Naive thymus-derived CD4-positive, alpha-beta T cell (primary cell): ENCODE measurements at regions of chr11 and their contacts with region 1.

Region 1: DNA sequence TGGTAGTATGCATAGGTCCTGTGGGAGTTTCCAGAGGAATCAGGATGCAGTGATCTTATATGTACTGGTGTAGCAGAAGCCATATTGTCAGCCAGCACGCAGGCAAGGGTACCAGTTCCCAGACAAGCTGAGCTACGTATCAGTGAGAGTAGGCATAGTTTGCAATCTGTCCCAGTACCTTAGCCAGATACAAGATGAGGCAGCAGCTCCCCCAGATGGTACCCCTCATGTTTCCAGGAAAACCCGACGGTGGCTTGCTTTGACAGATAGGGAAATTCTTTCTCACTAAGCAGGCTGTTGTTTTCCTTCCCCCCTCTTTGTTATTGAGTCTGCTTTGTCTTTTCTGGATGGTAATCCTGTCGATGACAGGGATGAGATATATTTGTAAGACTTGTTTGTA is 109.7 kb upstream of the RRM1 start:
- DNase-seq: peak in 8 of 9 donors; percentile 23 to 55 (median 36)
- ATAC-seq: peak; percentile 69
- H3K4me3 ChIP-seq: no peak overlapping the region
- H3K4me3 Mint-ChIP-seq: peak overlapping the region in 8 of 10 donors; percentile 1 to 43 (median 3)
- H3K27ac ChIP-seq: peak overlapping the region; percentile 5
- H3K27ac Mint-ChIP-seq: peak overlapping the region in 8 of 9 donors; percentile 26 to 90 (median 82)
- H3K4me1 ChIP-seq: peaks cover 20 to 45% of the 10 kb centered on the region in 2 donors
- H3K4me1 Mint-ChIP-seq: peaks cover 53 to 99% (median 93%) of the 10 kb centered on the region in 7 donors
- H3K27me3 ChIP-seq: no peaks in the 10 kb centered on the region
- H3K27me3 Mint-ChIP-seq: no peaks in the 10 kb centered on the region

Region 2: DNA sequence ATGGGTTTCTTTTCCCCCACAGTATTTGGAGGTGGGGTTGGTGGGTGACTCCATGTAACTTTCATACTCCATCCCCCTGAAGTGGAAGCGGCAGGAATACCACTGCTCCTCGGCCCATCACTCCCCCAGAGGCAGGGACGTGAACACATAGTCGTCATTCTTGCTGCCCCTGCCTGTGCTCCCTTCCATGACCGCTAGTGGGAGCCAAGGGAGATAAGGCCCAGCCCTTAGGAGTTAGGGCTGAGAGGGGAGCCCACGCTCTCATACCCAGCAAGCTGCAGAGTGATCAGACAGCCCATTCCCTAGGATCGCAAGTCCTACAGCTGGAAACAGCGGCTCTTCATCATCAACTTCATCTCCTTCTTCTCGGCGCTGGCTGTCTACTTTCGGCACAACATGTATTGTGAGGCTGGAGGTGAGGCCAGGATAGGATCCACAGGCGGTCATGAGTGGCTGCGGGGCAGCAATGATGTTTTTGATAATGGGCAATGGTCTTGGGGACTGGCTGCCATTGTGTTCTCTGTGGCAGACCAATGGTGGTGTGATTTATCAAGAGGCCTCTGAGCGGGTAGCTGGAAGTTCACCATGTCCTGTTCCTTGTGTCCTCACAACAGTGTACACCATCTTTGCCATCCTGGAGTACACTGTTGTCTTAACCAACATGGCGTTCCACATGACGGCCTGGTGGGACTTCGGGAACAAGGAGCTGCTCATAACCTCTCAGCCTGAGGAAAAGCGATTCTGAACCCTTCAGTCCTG is 160.0 kb before region 1 on chr11:
- CTCF ChIA-PET with region 1: no interaction called
- POLR2A ChIA-PET with region 1: no interaction called
- intact Hi-C with region 1: loop called in 1 of 2 experiments (anchors 1 kb)
- DNase-seq: peak; percentile 65 to 83 (median 77)
- ATAC-seq: peak; percentile 97
- H3K4me3 ChIP-seq: no peak overlapping the region
- H3K4me3 Mint-ChIP-seq: no peak overlapping the region
- H3K27ac ChIP-seq: peak overlapping the region; percentile 38
- H3K27ac Mint-ChIP-seq: peak overlapping the region; percentile 60 to 96 (median 87)
- H3K4me1 ChIP-seq: peaks cover 13 to 14% of the 10 kb centered on the region in 2 donors
- H3K4me1 Mint-ChIP-seq: peaks cover 15 to 46% (median 44%) of the 10 kb centered on the region in 7 donors
- H3K27me3 ChIP-seq: no peaks in the 10 kb centered on the region
- H3K27me3 Mint-ChIP-seq: no peaks in the 10 kb centered on the region

Region 3: DNA sequence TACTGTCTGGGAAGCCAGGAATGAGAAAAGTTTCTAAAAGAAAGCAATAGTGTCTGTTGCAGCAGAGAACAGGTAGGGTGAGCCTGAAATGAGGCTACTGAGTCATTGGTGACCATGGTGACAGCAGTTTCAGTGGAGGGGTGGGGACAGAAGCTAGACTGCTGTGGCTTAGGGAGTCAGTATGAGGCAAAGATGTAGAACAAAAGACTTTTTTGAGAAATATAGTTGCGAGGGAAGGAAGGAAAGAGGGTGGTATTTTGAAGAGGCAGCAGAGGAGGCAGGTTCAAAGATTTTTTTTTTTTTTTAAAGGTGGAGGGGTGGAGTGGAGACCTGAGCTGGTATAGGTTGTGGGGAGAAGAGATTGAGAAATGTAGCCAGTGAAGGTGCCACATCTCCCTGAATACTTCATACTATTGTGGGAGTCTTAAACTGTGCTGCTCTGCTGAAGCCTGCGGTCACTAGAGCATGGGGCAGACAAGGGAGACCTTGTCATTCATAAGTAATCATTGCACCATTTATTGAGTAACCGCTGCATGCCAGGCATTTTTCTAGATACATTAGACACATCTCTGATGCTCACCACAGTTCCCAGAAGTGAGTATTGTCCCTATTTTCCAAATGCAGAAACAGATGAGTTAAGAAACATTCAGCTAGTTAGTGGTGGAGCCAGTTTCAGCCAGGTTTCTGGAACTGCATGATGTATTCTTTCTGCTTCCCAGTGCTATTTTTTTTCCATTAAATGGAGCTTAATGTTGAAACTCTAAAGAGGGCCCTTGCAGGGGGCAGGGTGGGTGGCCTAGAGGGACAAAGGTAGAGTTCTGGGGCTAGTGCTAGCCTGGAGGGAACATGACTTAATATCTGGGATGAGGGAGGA is 79.6 kb before region 1 on chr11:
- CTCF ChIA-PET with region 1: no interaction called
- POLR2A ChIA-PET with region 1: interaction called, 3 read pairs
- intact Hi-C with region 1: loop called in 1 of 2 experiments (anchors 1 kb)
- DNase-seq: peak in 8 of 9 donors; percentile 45 to 80 (median 72)
- ATAC-seq: peak; percentile 92
- H3K4me3 ChIP-seq: no peak overlapping the region
- H3K4me3 Mint-ChIP-seq: peak overlapping the region; percentile 9 to 72 (median 54)
- H3K27ac ChIP-seq: peak overlapping the region; percentile 59
- H3K27ac Mint-ChIP-seq: peak overlapping the region; percentile 64 to 91 (median 81)
- H3K4me1 ChIP-seq: peaks cover 41 to 57% of the 10 kb centered on the region in 2 donors
- H3K4me1 Mint-ChIP-seq: peaks cover 66 to 93% (median 84%) of the 10 kb centered on the region in 7 donors
- H3K27me3 ChIP-seq: no peaks in the 10 kb centered on the region
- H3K27me3 Mint-ChIP-seq: no peaks in the 10 kb centered on the region

Region 4: GRCh38 chr11:3939211-3939610 is 45.7 kb before region 1 on chr11:
- CTCF ChIA-PET with region 1: interaction called, 7 read pairs
- POLR2A ChIA-PET with region 1: no interaction called
- intact Hi-C with region 1: loop called in 1 of 2 experiments (anchors 2 kb)
- DNase-seq: no peak
- ATAC-seq: no peak
- H3K4me3 ChIP-seq: no peak overlapping the region
- H3K4me3 Mint-ChIP-seq: peak overlapping the region in 1 of 10 donors; percentile 26
- H3K27ac ChIP-seq: no peak overlapping the region
- H3K27ac Mint-ChIP-seq: peak overlapping the region in 8 of 9 donors; percentile 44 to 95 (median 76)
- H3K4me1 ChIP-seq: peaks cover 26 to 49% of the 10 kb centered on the region in 2 donors
- H3K4me1 Mint-ChIP-seq: peaks cover 56 to 92% (median 84%) of the 10 kb centered on the region in 7 donors
- H3K27me3 ChIP-seq: no peaks in the 10 kb centered on the region
- H3K27me3 Mint-ChIP-seq: no peaks in the 10 kb centered on the region

Region 5: DNA sequence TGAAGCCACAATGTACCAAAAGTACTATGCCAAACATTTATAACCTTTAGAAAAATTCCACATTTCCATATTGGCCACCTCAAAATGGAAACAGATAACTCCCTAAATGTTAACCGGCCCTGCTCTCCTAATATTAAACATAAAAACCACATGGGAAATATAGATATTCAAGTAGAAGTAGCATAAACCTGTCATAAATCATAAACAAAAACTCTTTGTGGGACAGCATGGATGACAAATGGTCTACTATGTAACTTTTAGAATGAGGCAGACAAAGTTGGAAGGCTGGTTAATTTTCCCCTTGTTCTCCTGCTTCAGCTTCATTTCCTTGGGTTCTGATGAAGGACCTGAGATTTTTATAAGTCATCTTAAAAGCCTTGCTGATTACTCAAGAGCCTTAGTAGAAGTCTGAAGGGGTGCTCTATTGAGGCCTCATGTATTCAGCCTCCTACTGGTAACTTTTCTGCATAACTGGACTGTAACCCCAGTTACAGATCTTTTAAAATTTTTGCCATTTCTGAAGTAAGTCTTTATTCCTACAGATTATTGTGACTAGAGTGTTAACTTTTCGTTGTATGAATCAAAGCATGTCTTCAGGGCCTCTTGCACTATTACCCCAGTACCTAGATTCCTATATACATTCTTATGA is 13.0 kb before region 1 on chr11:
- CTCF ChIA-PET with region 1: interaction called, 4 read pairs
- POLR2A ChIA-PET with region 1: interaction called, 14 read pairs
- intact Hi-C with region 1: loop called (anchors 1 to 2 kb)
- DNase-seq: no peak
- ATAC-seq: peak; percentile 41
- H3K4me3 ChIP-seq: no peak overlapping the region
- H3K4me3 Mint-ChIP-seq: peak overlapping the region in 1 of 10 donors; percentile 5
- H3K27ac ChIP-seq: no peak overlapping the region
- H3K27ac Mint-ChIP-seq: peak overlapping the region in 6 of 9 donors; percentile 39 to 88 (median 53)
- H3K4me1 ChIP-seq: peaks cover 10 to 28% of the 10 kb centered on the region in 2 donors
- H3K4me1 Mint-ChIP-seq: peaks cover 35 to 89% (median 81%) of the 10 kb centered on the region in 7 donors
- H3K27me3 ChIP-seq: no peaks in the 10 kb centered on the region
- H3K27me3 Mint-ChIP-seq: no peaks in the 10 kb centered on the region